CD4-positive, alpha-beta memory T cell (primary cell): ENCODE measurements at regions of chr3 and their contacts with region 1.

Region 1: GRCh38 chr3:15345608-15346137 is 13.3 kb upstream of the SH3BP5 start:
- DNase-seq: peak in 2 of 5 donors; percentile 21 to 31
- H3K4me3 ChIP-seq: no peak overlapping the region
- H3K4me3 Mint-ChIP-seq: peak overlapping the region in 6 of 8 donors; percentile 23 to 70 (median 41)
- H3K27ac ChIP-seq: no peak overlapping the region
- H3K27ac Mint-ChIP-seq: peak overlapping the region; percentile 36 to 91 (median 71)
- H3K4me1 ChIP-seq: peaks cover 64% of the 10 kb centered on the region
- H3K4me1 Mint-ChIP-seq: peaks cover 51 to 79% (median 67%) of the 10 kb centered on the region in 4 donors
- H3K27me3 ChIP-seq: no peaks in the 10 kb centered on the region
- H3K27me3 Mint-ChIP-seq: no peaks in the 10 kb centered on the region

Region 2: GRCh38 chr3:14757153-14757700 is 588.4 kb before region 1 on chr3:
- CTCF ChIA-PET with region 1: no interaction called
- POLR2A ChIA-PET with region 1: no interaction called
- intact Hi-C with region 1: no loop called
- DNase-seq: no peak
- H3K4me3 ChIP-seq: no peak overlapping the region
- H3K4me3 Mint-ChIP-seq: no peak overlapping the region
- H3K27ac ChIP-seq: no peak overlapping the region
- H3K27ac Mint-ChIP-seq: no peak overlapping the region
- H3K4me1 ChIP-seq: no peaks in the 10 kb centered on the region
- H3K4me1 Mint-ChIP-seq: peaks cover 0 to 2% (median under 1%) of the 10 kb centered on the region in 4 donors
- H3K27me3 ChIP-seq: no peaks in the 10 kb centered on the region
- H3K27me3 Mint-ChIP-seq: peaks cover 2 to 8% of the 10 kb centered on the region in 2 donors

Region 3: DNA sequence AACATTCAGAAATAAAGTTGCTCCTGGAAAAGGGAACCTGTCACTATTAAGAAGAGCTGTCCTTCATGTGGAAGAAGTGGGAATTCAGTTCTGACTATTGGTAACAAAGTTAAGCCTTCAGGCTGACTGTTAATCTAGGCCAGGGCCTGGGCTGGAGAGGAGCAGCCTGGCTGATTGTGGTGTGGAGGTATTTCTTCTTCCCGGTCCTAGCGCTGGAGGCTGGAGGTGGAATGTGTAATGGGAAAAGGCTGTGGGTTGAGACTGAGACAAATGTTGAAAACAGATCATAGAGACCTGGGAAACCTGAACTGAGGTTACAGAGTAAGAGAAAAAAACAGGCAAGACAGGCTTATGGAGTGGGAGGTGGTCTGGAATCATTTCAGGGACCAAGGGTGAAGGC is 10.5 kb after region 1 on chr3:
- CTCF ChIA-PET with region 1: interaction called, 13 read pairs
- POLR2A ChIA-PET with region 1: interaction called, 15 read pairs
- intact Hi-C with region 1: loop called (anchors 1 kb)
- DNase-seq: no peak
- H3K4me3 ChIP-seq: peak overlapping the region in 1 of 2 donors; percentile 49
- H3K4me3 Mint-ChIP-seq: peak overlapping the region; percentile 62 to 91 (median 80)
- H3K27ac ChIP-seq: peak overlapping the region; percentile 72
- H3K27ac Mint-ChIP-seq: peak overlapping the region; percentile 90 to 99 (median 97)
- H3K4me1 ChIP-seq: peaks cover 67% of the 10 kb centered on the region
- H3K4me1 Mint-ChIP-seq: peaks cover 30 to 58% (median 46%) of the 10 kb centered on the region in 4 donors
- H3K27me3 ChIP-seq: no peaks in the 10 kb centered on the region
- H3K27me3 Mint-ChIP-seq: no peaks in the 10 kb centered on the region

Region 4: GRCh38 chr3:15361494-15362212 is 16.0 kb after region 1 on chr3:
- CTCF ChIA-PET with region 1: interaction called, 13 read pairs
- POLR2A ChIA-PET with region 1: interaction called, 15 read pairs
- intact Hi-C with region 1: loop called (anchors 1 kb)
- DNase-seq: peak in 1 of 5 donors; percentile 39
- H3K4me3 ChIP-seq: no peak overlapping the region
- H3K4me3 Mint-ChIP-seq: peak overlapping the region in 7 of 8 donors; percentile 56 to 92 (median 73)
- H3K27ac ChIP-seq: peak overlapping the region; percentile 36
- H3K27ac Mint-ChIP-seq: peak overlapping the region; percentile 86 to 93 (median 89)
- H3K4me1 ChIP-seq: peaks cover 54% of the 10 kb centered on the region
- H3K4me1 Mint-ChIP-seq: peaks cover 28 to 59% (median 37%) of the 10 kb centered on the region in 4 donors
- H3K27me3 ChIP-seq: no peaks in the 10 kb centered on the region
- H3K27me3 Mint-ChIP-seq: no peaks in the 10 kb centered on the region

Region 5: DNA sequence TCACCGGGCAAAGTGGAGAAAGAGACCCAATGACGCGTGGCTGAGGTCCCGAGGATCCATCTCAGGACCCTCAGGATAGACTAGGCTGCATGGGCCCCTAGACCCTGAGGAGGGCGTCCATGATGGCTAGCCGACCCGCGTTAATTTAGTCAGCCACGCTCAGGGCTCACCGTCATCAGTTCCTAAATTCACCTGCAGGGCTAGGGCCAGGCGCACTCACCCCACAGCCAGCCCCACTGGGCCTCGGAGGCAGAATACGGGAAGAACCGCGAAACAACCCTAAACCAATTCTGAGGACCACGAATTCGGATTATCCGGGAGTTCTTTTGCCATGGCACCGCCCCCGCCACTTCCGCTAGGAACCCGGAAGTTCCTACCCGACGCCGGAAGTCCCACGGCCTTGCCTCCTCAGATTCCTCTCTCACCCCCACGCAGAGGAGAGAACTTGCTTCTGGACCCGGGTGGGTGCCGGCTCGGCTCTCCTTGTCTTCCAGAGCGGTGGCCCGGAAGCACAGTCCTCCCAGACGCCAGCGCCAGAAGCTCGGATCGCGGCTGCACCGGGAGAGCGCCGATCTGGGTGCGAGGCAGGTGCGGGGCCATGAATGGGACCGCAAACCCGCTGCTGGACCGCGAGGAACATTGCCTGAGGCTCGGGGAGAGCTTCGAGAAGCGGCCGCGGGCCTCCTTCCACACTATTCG is 81.7 kb after region 1 on chr3 and contains the starts of genes EAF1 and METTL6:
- CTCF ChIA-PET with region 1: no interaction called
- POLR2A ChIA-PET with region 1: no interaction called
- intact Hi-C with region 1: no loop called
- DNase-seq: peak; percentile 81 to 87 (median 83)
- H3K4me3 ChIP-seq: peak within 1 kb of the TSS; percentile 99
- H3K4me3 Mint-ChIP-seq: peak within 1 kb of the TSS; percentile 88 to 99 (median 98)
- H3K27ac ChIP-seq: peak within 1 kb of the TSS; percentile 89
- H3K27ac Mint-ChIP-seq: peak within 1 kb of the TSS; percentile 83 to 98 (median 97)
- H3K4me1 ChIP-seq: peaks cover 52% of the 10 kb centered on the region
- H3K4me1 Mint-ChIP-seq: peaks cover 32 to 80% (median 59%) of the 10 kb centered on the region in 4 donors
- H3K27me3 ChIP-seq: no peaks in the 10 kb centered on the region
- H3K27me3 Mint-ChIP-seq: no peaks in the 10 kb centered on the region
- total RNA-seq, gene EAF1: 17.6 to 19.7 TPM
- total RNA-seq, gene METTL6: 17.3 to 17.4 TPM